ENCODE measurements at regions of chr11 and their contacts with region 1.

Region 1: DNA sequence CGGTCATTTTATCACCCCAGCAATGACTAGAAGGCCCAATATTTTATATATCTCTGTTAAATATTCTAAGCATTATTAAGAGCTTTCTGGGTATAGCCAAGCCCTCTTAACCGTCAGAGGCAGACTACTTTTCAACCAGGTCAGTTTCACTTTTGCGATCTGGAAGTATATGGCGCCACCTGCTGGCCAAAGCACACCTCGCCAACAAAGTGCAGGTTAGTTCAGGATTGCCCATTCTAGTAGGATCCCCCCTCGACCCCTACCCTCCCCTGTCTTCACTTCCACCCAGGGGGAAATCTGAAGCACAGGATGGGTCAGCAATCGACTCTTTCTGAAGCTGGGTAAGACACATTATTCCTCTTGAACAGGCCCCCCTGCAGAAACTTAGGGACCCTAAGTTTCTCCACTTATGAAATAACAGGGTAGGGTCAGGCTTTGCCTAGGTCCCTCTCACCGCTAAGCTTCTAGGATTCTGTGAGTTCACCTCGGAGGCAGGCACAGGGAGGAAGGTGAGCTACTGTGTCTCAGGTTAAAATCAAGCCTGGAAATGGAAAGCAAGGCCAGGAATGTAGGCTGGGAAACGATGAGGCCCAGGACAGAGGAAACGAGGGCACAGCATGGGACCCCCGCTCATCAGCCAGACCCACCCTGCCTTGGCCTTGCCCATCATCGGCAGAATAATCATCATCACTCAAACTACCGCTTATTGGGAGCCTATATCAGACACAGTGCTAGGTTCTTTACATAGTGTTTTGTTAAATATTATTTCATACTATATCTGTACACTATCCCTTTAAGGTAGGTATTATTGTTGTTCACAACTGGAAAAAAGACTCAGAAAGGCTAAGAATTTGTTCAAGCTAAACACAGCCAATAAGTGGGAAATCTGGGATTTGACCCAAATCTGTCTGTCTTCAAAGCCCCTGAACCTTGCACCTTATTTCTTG is 35.6 kb downstream of the KCNJ1 start:
- DNase-seq: peak; percentile 92
- ATAC-seq: peak; percentile 85
- H3K4me3 Mint-ChIP-seq: peak overlapping the region; percentile 52
- H3K27ac Mint-ChIP-seq: peak overlapping the region; percentile 92
- H3K4me1 Mint-ChIP-seq: peaks cover 26% of the 10 kb centered on the region
- H3K27me3 Mint-ChIP-seq: no peaks in the 10 kb centered on the region
- CTCF ChIP-seq: peak; percentile 82

Region 2: GRCh38 chr11:128039140-128040021 is 792.1 kb before region 1 on chr11:
- CTCF ChIA-PET with region 1: interaction called, 4 read pairs
- POLR2A ChIA-PET with region 1: interaction called, 3 read pairs
- intact Hi-C with region 1: loop called (anchors 5 kb)
- DNase-seq: peak; percentile 91
- ATAC-seq: peak; percentile 90
- H3K4me3 Mint-ChIP-seq: peak overlapping the region; percentile 58
- H3K27ac Mint-ChIP-seq: peak overlapping the region; percentile 93
- H3K4me1 Mint-ChIP-seq: peaks cover 42% of the 10 kb centered on the region
- H3K27me3 Mint-ChIP-seq: no peaks in the 10 kb centered on the region
- CTCF ChIP-seq: peak; percentile 45

Region 3: GRCh38 chr11:128279866-128280265 is 551.6 kb before region 1 on chr11:
- CTCF ChIA-PET with region 1: interaction called, 3 read pairs
- POLR2A ChIA-PET with region 1: no interaction called
- intact Hi-C with region 1: loop called (anchors 10 kb)
- DNase-seq: no peak
- ATAC-seq: no peak
- H3K4me3 Mint-ChIP-seq: no peak overlapping the region
- H3K27ac Mint-ChIP-seq: no peak overlapping the region
- H3K4me1 Mint-ChIP-seq: peaks cover 13% of the 10 kb centered on the region
- H3K27me3 Mint-ChIP-seq: peaks cover 2% of the 10 kb centered on the region
- CTCF ChIP-seq: no peak

Region 4: GRCh38 chr11:128653801-128654231 is 177.6 kb before region 1 on chr11:
- CTCF ChIA-PET with region 1: interaction called, 10 read pairs
- POLR2A ChIA-PET with region 1: no interaction called
- intact Hi-C with region 1: no loop called
- DNase-seq: no peak
- ATAC-seq: no peak
- H3K4me3 Mint-ChIP-seq: no peak overlapping the region
- H3K27ac Mint-ChIP-seq: no peak overlapping the region
- H3K4me1 Mint-ChIP-seq: peaks cover 10% of the 10 kb centered on the region
- H3K27me3 Mint-ChIP-seq: peaks cover 3% of the 10 kb centered on the region
- CTCF ChIP-seq: no peak

Region 5: GRCh38 chr11:128776424-128777284 is 54.8 kb before region 1 on chr11:
- CTCF ChIA-PET with region 1: interaction called, 20 read pairs
- POLR2A ChIA-PET with region 1: interaction called, 4 read pairs
- intact Hi-C with region 1: no loop called
- DNase-seq: peak; percentile 47
- ATAC-seq: peak; percentile 68
- H3K4me3 Mint-ChIP-seq: no peak overlapping the region
- H3K27ac Mint-ChIP-seq: peak overlapping the region; percentile 71
- H3K4me1 Mint-ChIP-seq: peaks cover 40% of the 10 kb centered on the region
- H3K27me3 Mint-ChIP-seq: no peaks in the 10 kb centered on the region
- CTCF ChIP-seq: peak; percentile 49

Region 6: DNA sequence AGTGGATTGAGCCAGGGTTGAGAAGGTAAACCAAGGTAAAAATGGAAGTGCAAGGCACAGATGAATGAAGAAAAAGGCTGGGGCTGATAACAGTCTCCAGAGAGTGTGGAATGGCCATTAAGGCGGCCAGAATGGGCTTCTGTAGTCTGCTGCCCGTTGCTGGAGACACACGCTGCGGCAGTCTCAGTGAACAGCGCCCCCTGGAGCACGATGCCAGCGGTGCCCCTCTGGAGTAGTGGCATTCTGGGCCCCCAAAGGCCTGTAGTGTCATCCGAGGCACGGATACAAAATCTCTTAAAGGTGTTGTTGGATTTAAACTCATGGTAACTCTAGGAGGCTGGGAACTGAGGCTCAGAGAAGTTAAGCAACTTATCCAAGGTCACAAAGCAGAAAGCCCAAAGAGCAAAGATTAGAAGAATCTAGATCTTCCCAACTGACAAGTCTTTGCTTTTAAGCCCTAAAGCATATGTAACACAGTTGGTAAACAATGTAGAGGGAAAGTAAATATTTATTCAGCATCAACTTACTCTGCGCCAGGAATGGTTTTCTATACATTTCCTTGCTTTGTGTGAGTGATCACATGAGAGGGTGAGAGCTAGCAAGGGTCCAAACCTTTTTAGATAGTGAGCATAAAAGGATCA is 17.5 kb after region 1 on chr11:
- CTCF ChIA-PET with region 1: interaction called, 59 read pairs
- POLR2A ChIA-PET with region 1: interaction called, 3 read pairs
- intact Hi-C with region 1: no loop called
- DNase-seq: peak; percentile 84
- ATAC-seq: peak; percentile 90
- H3K4me3 Mint-ChIP-seq: no peak overlapping the region
- H3K27ac Mint-ChIP-seq: no peak overlapping the region
- H3K4me1 Mint-ChIP-seq: peaks cover 21% of the 10 kb centered on the region
- H3K27me3 Mint-ChIP-seq: no peaks in the 10 kb centered on the region
- CTCF ChIP-seq: peak; percentile 81

Region 7: GRCh38 chr11:129013737-129014475 is 182.5 kb after region 1 on chr11:
- CTCF ChIA-PET with region 1: no interaction called
- POLR2A ChIA-PET with region 1: no interaction called
- intact Hi-C with region 1: no loop called
- DNase-seq: no peak
- ATAC-seq: no peak
- H3K4me3 Mint-ChIP-seq: no peak overlapping the region
- H3K27ac Mint-ChIP-seq: no peak overlapping the region
- H3K4me1 Mint-ChIP-seq: no peaks in the 10 kb centered on the region
- H3K27me3 Mint-ChIP-seq: no peaks in the 10 kb centered on the region
- CTCF ChIP-seq: no peak

Measured in activated CD8-positive, alpha-beta T cell treated with anti-CD3 and anti-CD28 coated beads for 36 hours (primary cell).